ENCODE measurements at regions of chr1 and their contacts with region 1.

Region 1: DNA sequence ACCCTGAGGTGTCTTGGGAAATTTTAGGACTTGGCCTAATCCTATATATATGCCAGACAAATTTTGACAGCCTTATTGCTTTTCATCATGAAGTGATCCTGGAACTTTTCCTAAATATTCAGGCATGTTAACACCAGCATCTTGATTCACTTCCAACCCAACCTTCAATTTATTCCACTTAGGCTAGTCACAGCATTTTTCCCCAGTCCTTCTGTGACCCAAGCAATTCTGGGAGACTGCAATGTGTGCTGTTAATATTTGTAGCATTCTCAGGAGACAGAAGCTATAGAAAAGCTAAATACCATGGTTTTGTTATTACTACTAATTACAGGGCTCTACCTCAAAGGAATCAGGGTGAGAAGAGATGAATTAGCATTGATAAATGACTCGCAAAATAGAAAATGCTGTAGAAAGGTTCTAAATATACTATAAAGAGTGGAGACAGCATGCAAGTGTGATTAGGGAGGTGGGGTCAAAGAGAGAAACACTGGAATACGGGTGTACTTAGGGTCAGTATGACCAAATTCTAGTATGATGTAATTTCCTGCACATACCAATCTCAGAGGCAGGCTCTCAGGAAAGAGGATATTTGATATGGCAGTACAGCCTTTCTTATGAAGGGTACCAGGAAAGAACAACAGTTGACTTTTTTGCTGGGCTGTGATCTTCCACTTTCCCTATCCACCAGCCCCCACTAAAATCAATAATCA is 29.1 kb downstream of the PRRX1 start:
- DNase-seq: peak; percentile 74
- H3K4me3 ChIP-seq: no peak overlapping the region
- H3K27ac ChIP-seq: peak overlapping the region; percentile 20
- H3K4me1 ChIP-seq: peaks cover 33% of the 10 kb centered on the region
- H3K27me3 ChIP-seq: no peaks in the 10 kb centered on the region
- CTCF ChIP-seq: no peak

Region 2: DNA sequence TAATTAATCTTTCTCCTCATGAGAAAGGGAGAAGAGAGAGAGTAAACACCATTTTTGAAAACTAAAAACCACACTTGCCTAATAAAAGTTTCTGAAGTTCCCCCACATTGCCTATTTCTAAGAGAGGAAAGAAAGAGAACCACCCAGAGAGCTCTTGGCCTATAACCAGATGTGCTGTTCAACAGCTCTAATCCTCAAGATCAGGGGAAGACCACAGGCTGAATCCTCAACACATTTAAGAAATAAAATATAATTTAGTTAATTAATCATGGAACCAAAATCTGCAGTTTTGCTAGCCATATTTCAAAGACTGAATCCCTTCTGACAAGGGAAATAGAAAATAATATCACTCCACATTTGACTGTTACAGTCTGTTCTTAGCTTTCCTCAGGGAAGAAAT is 17.2 kb before region 1 on chr1:
- CTCF ChIA-PET with region 1: interaction called, 10 read pairs
- POLR2A ChIA-PET with region 1: no interaction called
- intact Hi-C with region 1: no loop called
- DNase-seq: no peak
- H3K4me3 ChIP-seq: no peak overlapping the region
- H3K27ac ChIP-seq: no peak overlapping the region
- H3K4me1 ChIP-seq: no peaks in the 10 kb centered on the region
- H3K27me3 ChIP-seq: peaks cover 32% of the 10 kb centered on the region
- CTCF ChIP-seq: no peak

Region 3: GRCh38 chr1:170765712-170766330 is 72.8 kb after region 1 on chr1:
- CTCF ChIA-PET with region 1: interaction called, 3 read pairs
- POLR2A ChIA-PET with region 1: no interaction called
- intact Hi-C with region 1: loop called (anchors 1 kb)
- DNase-seq: peak; percentile 48
- H3K4me3 ChIP-seq: no peak overlapping the region
- H3K27ac ChIP-seq: no peak overlapping the region
- H3K4me1 ChIP-seq: no peaks in the 10 kb centered on the region
- H3K27me3 ChIP-seq: no peaks in the 10 kb centered on the region
- CTCF ChIP-seq: peak; percentile 67

Region 4: DNA sequence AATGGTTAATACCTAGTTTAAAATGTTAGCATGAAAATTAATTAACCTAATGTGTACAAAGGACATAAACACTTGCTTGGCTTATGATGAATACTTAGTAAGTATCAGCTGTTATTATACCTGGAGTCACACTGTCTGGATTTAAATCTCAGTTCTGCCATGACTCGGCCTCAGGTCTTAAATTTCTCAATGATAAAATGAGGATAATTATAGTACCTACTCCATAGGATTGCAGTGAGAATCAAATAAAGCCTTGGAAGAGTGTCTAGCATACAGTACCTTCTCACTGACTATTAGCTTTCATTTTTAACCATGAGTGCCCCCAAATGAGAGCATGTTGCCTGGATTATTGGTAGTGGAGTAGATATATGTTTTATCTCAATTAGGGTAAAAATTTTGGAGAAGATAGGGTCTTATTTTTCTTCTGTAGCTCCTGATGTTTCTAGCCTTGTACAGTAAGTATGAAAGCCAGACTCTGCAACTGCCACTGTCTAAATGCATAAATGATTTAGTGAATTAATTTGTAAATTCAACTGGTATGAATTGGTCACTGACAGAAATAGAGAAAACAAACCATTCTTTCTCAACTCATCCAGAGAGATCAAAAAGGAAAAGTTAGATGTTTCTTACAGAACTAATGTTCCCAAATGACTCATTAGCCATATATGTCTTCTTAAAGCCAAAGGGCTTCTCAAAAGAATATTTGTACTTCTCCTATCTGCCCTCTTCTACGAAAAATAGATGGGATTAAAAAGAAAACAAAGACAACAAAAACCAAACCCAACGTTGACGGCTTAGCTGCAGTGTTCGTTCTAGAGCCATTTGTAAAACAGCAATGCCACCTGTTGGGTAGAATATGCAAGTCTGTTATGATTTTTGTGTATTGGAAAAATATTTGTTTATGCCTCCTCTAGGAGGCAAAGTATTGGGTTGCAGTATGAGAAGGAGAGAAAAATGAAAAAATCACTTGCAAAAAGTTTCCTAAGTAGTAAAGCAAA is 188.5 kb after region 1 on chr1:
- CTCF ChIA-PET with region 1: interaction called, 9 read pairs
- POLR2A ChIA-PET with region 1: no interaction called
- intact Hi-C with region 1: loop called (anchors 5 kb)
- DNase-seq: peak; percentile 48
- H3K4me3 ChIP-seq: no peak overlapping the region
- H3K27ac ChIP-seq: no peak overlapping the region
- H3K4me1 ChIP-seq: no peaks in the 10 kb centered on the region
- H3K27me3 ChIP-seq: peaks cover 3% of the 10 kb centered on the region
- CTCF ChIP-seq: peak; percentile 63

Region 5: DNA sequence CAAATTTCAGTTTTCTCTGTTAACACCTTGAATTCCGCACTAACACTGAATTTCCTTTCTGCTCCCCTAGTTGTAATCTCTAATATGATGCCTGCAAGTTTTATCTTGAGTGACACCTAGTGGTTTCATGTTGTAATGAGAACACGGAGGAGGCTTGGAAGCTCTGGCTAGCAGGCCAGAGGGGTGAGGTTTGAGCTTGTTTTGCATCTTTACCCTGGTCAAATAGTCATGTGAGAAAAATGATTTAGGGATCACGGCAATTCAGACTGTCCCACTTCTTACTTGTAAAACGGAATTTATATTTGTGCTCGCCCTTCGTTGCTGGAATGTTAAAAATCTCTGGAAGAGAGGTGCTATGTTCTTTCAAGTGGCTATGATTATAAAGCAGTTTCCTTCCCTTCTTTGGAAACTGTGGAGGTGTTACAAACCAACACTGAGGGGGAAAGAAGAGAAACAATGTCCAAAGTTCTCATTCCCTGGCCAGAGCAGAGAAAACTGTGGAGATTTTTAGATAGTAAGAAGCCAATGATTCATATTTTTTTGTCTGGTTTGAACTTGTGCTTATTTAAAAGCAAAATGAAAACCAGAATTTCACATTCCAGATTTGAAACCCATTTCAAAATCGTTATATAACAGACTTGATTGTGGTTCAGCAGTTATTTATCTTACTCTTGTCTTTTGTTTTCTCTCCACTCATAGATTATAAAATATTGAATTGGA is 237.0 kb after region 1 on chr1:
- CTCF ChIA-PET with region 1: interaction called, 5 read pairs
- POLR2A ChIA-PET with region 1: no interaction called
- intact Hi-C with region 1: loop called (anchors 5 kb)
- DNase-seq: peak; percentile 71
- H3K4me3 ChIP-seq: no peak overlapping the region
- H3K27ac ChIP-seq: no peak overlapping the region
- H3K4me1 ChIP-seq: no peaks in the 10 kb centered on the region
- H3K27me3 ChIP-seq: peaks cover 8% of the 10 kb centered on the region
- CTCF ChIP-seq: peak; percentile 77

Region 6: GRCh38 chr1:171233190-171233589 is 540.2 kb after region 1 on chr1:
- CTCF ChIA-PET with region 1: no interaction called
- POLR2A ChIA-PET with region 1: no interaction called
- intact Hi-C with region 1: no loop called
- DNase-seq: no peak
- H3K4me3 ChIP-seq: no peak overlapping the region
- H3K27ac ChIP-seq: no peak overlapping the region
- H3K4me1 ChIP-seq: no peaks in the 10 kb centered on the region
- H3K27me3 ChIP-seq: no peaks in the 10 kb centered on the region
- CTCF ChIP-seq: no peak